K562 (cell line): ENCODE measurements at regions of chr3 and their contacts with region 1.

Region 1: DNA sequence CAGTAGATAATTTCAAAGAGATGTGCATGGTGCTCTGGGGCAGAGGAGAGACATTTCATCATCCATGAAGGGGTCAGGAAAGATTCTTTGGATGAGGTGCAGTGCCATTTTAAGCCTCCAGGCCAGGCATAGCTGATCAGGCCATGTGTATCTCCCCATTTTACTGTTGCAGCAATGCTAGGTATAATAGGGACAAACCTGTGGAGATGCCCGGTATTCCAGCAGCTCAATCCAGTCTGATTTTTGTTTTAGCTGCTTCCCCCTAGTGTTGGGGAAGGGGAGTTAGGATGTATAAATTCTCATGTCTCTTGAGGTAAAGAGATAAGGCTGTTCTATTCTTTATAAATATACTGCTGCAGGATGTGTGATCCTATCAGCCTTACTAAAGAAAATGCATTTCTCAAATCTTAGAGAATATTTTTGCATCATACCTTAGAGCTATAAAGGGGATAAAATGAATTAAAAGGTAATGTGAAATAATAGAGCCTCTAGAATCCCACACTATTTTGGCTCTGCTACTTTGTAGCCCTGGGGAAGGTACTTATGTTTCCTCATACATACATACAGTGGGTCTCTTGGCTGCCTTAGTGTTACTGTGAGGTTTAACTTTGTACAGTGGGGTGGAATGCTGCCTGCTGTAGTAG is 5.2 kb downstream of the CDV3 start:
- DNase-seq: peak; percentile 15 to 37 (median 33)
- ATAC-seq: peak; percentile 49
- H3K4me3 ChIP-seq: no peak overlapping the region
- H3K27ac ChIP-seq: no peak overlapping the region
- H3K4me1 ChIP-seq: peaks cover 3 to 9% of the 10 kb centered on the region in 2 experiments; a peak in 4 of 5 replicates
- H3K27me3 ChIP-seq: no peaks in the 10 kb centered on the region
- CTCF ChIP-seq: peak; percentile 36 to 57 (median 54); a peak in 5 of 6 replicates
- EP300 ChIP-seq: no peak
- POLR2A ChIP-seq: no peak
- RAD21 ChIP-seq: peak in 1 of 2 experiments; percentile 41; a peak in 1 of 4 replicates

Region 2: DNA sequence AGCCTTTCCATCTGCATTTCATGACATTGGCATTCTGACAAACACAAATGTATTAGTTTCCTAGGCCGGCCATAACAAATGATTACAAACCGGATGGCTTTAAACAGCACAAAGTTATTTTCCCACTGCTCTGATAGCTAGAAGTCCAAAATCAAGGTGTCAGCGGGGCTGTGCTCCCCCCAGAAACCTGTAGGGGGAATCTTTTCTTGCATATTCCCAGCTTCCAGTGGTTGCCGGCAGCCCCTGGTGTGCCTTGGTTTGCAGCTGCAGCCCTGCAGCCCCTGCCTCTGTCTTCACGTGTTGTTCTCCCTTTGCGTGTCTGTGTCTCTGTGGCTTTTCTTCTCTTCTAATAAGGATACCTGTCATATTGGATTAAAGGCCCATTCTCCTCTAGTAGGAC is 84.2 kb before region 1 on chr3:
- CTCF ChIA-PET with region 1: no interaction called
- POLR2A ChIA-PET with region 1: no interaction called
- in situ Hi-C with region 1: no loop called
- intact Hi-C with region 1: loop called (anchors 2 kb)
- DNase-seq: peak in 2 of 4 experiments; percentile 36 to 42
- ATAC-seq: peak; percentile 92
- H3K4me3 ChIP-seq: no peak overlapping the region
- H3K27ac ChIP-seq: no peak overlapping the region
- H3K4me1 ChIP-seq: no peaks in the 10 kb centered on the region; a peak in 1 of 5 replicates
- H3K27me3 ChIP-seq: no peaks in the 10 kb centered on the region
- CTCF ChIP-seq: peak; percentile 48 to 55 (median 54); a peak in 5 of 6 replicates
- EP300 ChIP-seq: no peak
- POLR2A ChIP-seq: no peak
- RAD21 ChIP-seq: peak in 1 of 2 experiments; percentile 54; a peak in 2 of 4 replicates